ENCODE measurements at regions of chr13 and their contacts with region 1.

Region 1: DNA sequence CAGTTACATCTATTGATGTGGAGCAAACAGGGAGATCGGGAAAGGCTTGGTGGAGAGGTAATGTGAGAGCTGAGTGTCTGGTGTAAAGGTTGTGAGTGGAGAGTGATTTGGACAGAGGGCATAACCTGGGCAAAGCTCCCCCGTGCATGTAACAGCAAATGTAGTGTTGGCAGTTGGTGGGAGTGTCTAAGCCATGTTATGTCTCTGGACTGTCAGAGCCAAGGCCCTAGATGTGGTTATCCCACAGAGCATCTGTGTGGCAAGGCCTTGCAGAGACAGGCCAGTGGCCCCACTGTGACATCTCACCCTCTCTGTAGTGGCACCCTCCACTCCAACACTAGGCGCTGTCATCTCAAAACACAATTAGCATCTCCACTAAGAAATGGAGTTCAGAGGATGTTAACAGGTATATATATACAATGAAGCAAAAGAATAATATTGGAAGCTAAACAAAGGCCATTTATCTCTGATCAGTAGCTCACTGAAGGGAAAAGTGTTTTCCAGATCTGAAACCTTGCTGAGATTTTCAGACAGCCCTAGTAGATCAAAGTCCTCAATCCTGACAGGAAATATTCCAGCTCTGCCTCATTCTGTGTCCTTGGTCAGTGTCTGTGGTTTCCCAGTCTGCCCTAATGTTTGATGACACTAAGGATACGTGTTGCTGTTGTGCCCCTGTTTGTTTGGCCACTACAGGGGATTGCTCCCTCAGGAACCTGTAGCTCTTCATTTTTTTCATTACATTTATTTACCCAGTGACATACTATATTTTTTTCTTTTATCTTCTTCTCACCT is 20.2 kb downstream of the POLR1D start:
- DNase-seq: no peak
- ATAC-seq: no peak
- H3K4me3 ChIP-seq: no peak overlapping the region
- H3K4me3 Mint-ChIP-seq: no peak overlapping the region
- H3K27ac ChIP-seq: no peak overlapping the region
- H3K27ac Mint-ChIP-seq: no peak overlapping the region
- H3K4me1 ChIP-seq: no peaks in the 10 kb centered on the region
- H3K4me1 Mint-ChIP-seq: peaks cover 61 to 73% (median 61%) of the 10 kb centered on the region in 3 donors
- H3K27me3 ChIP-seq: no peaks in the 10 kb centered on the region
- H3K27me3 Mint-ChIP-seq: no peaks in the 10 kb centered on the region

Region 2: DNA sequence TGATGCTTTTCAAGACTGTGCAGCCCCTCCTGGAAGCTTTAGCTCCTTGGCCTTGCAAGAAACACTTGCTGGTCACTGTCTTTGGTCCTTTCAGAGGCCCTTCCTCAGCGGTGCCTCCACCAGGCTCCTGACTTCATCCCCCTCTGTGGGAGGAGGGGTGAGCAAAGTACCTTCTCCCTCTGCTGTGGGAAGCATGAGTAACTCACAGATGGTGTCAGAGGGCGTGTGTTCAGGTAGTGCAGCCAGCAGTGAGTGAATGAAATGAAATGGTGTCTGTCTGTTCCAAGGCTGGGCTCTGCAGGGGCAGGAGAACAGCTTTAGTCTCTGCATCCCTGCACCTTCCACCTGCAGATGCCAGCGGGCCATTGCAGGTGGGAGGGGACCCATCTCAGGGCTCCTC is 1693.0 kb before region 1 on chr13:
- CTCF ChIA-PET with region 1: no interaction called
- POLR2A ChIA-PET with region 1: no interaction called
- DNase-seq: no peak
- ATAC-seq: peak in 1 of 4 experiments; percentile 29
- H3K4me3 ChIP-seq: no peak overlapping the region
- H3K4me3 Mint-ChIP-seq: no peak overlapping the region
- H3K27ac ChIP-seq: no peak overlapping the region
- H3K27ac Mint-ChIP-seq: no peak overlapping the region
- H3K4me1 ChIP-seq: peaks cover 0 to 19% of the 10 kb centered on the region in 2 experiments
- H3K4me1 Mint-ChIP-seq: peaks cover 10 to 18% (median 13%) of the 10 kb centered on the region in 3 donors
- H3K27me3 ChIP-seq: peaks cover 0 to 8% of the 10 kb centered on the region in 2 experiments
- H3K27me3 Mint-ChIP-seq: no peaks in the 10 kb centered on the region

Region 3: DNA sequence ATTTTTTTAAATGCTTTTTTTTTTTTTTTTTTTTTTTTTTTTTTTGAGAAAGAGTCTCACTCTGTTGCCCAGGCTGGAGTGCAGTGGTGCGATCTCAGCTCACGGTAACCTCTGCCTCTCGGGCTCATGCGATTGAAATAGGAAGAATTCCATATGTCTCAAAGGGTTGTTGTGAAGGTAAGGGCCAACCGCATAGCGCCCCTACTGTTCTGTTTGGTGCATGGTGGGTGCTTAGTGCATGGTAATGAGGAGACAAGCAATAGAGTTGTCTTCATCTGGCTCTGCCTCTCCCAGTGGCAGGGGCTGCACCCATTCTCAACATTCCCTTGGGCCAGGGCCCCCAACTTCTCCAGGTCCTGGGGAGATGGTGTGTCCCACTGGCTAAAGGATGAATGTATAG is 302.6 kb before region 1 on chr13:
- CTCF ChIA-PET with region 1: no interaction called
- POLR2A ChIA-PET with region 1: interaction called in 1 of 2 experiments, 13 read pairs
- DNase-seq: peak in 33 of 35 experiments; percentile 7 to 65 (median 32)
- ATAC-seq: peak in 3 of 4 experiments; percentile 69 to 88 (median 78)
- H3K4me3 ChIP-seq: no peak overlapping the region
- H3K4me3 Mint-ChIP-seq: no peak overlapping the region
- H3K27ac ChIP-seq: no peak overlapping the region
- H3K27ac Mint-ChIP-seq: no peak overlapping the region
- H3K4me1 ChIP-seq: no peaks in the 10 kb centered on the region
- H3K4me1 Mint-ChIP-seq: peaks cover 0 to 3% (median 3%) of the 10 kb centered on the region in 3 donors
- H3K27me3 ChIP-seq: peaks cover 0 to 37% of the 10 kb centered on the region in 2 experiments
- H3K27me3 Mint-ChIP-seq: peaks cover 7 to 9% of the 10 kb centered on the region in 2 donors

Measured in T-cell (primary cell).